ENCODE measurements at regions of chr19 and their contacts with region 1.

Region 1: GRCh38 chr19:44770550-44771257 is 7.0 kb upstream of the CBLC start:
- DNase-seq: peak; percentile 97
- ATAC-seq: peak; percentile 100
- H3K4me3 Mint-ChIP-seq: peak overlapping the region; percentile 73
- H3K27ac Mint-ChIP-seq: peak overlapping the region; percentile 86
- H3K4me1 Mint-ChIP-seq: peaks cover 30% of the 10 kb centered on the region
- H3K27me3 Mint-ChIP-seq: no peaks in the 10 kb centered on the region
- CTCF ChIP-seq: no peak

Region 2: DNA sequence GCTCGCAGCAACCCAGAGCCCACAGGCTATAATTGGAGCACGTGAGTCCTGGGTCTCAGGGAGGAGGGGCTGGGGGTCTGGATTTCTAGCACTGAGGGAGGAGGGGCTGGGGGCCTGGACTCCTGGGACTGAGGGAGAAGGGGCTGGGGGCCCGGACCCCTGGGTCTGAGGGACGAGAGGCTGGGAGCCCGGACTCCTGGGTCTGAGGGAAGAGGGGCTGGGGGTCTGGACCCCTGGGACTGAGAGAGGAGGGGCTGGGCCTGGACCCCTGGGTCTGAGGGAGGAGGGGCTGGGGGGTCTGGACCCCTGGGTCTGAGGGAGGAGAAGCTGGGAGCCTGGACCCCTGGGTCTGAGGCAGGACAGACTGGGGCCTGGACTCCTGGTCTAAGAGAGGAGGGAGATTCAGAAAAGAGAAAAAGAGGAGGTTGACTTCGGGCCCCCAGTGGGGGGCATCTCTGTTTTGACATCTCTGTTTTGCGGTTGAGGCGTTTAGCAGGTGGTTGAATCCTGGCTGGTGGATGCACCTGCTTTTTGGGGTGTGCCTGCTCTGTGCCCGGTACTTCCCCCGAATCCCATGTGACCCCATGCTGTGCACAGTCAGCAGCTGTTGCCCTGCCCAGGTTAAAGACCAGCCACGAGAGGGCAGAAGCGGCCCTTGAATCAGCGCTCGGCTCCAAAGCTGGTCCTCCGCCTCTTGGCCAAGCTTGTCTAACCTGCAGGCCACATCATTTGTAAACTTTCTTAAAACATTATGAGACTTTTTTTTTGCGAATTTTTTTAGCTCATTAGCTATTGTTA is 116.5 kb before region 1 on chr19:
- CTCF ChIA-PET with region 1: interaction called, 16 read pairs
- POLR2A ChIA-PET with region 1: interaction called, 10 read pairs
- intact Hi-C with region 1: loop called (anchors 1 kb)
- DNase-seq: peak; percentile 62
- ATAC-seq: peak; percentile 94
- H3K4me3 Mint-ChIP-seq: no peak overlapping the region
- H3K27ac Mint-ChIP-seq: peak overlapping the region; percentile 53
- H3K4me1 Mint-ChIP-seq: peaks cover 21% of the 10 kb centered on the region
- H3K27me3 Mint-ChIP-seq: no peaks in the 10 kb centered on the region
- CTCF ChIP-seq: no peak

Region 3: GRCh38 chr19:44741841-44742352 is 28.8 kb before region 1 on chr19:
- CTCF ChIA-PET with region 1: interaction called, 4 read pairs
- POLR2A ChIA-PET with region 1: interaction called, 10 read pairs
- intact Hi-C with region 1: no loop called
- DNase-seq: no peak
- ATAC-seq: peak; percentile 70
- H3K4me3 Mint-ChIP-seq: no peak overlapping the region
- H3K27ac Mint-ChIP-seq: peak overlapping the region; percentile 56
- H3K4me1 Mint-ChIP-seq: peaks cover 29% of the 10 kb centered on the region
- H3K27me3 Mint-ChIP-seq: no peaks in the 10 kb centered on the region
- CTCF ChIP-seq: no peak

Region 4: DNA sequence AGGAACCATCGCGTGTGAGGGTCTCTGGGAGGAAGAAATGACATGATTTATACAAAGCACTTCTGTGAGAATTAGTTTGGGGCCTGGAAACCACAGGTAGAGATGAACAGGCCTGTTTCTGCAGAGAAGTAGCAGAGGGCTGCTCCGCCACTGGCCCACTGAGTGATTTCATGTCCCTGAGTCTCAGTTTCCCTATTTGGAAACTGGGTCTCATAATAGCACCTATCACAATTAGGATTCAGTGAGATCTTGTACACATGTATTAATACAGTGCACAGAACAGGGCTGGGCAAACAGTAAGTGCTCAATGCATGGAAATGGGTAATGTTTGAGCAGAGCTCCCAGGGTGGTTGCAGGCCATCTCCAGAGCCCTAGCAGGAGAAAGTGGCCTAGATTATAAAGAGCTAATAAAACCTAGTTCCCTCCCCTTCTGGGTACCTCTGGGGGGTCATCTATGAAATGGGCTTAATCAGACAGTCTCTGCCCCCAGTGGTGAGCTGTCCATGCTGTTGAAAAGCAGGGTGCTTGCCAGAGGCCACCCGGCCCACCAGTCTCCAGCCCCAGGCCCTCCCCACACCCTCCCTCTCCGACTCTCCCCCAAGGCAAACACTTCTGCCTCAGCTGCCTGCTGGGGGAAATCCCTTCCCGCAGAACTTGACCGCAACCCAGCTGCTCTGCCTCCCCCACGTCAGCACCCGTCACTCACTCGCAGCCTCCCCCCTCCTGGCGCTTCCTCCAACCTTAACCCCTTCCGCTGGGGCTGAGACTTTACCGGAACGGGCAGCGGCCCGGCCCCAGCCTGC is 17.7 kb before region 1 on chr19:
- CTCF ChIA-PET with region 1: interaction called, 35 read pairs
- POLR2A ChIA-PET with region 1: interaction called, 283 read pairs
- intact Hi-C with region 1: loop called (anchors 1 kb)
- DNase-seq: peak; percentile 87
- ATAC-seq: peak; percentile 76
- H3K4me3 Mint-ChIP-seq: peak overlapping the region; percentile 95
- H3K27ac Mint-ChIP-seq: peak overlapping the region; percentile 96
- H3K4me1 Mint-ChIP-seq: peaks cover 68% of the 10 kb centered on the region
- H3K27me3 Mint-ChIP-seq: no peaks in the 10 kb centered on the region
- CTCF ChIP-seq: no peak

Region 5: GRCh38 chr19:44856421-44857083 is 85.8 kb after region 1 on chr19:
- CTCF ChIA-PET with region 1: no interaction called
- POLR2A ChIA-PET with region 1: no interaction called
- intact Hi-C with region 1: no loop called
- DNase-seq: no peak
- ATAC-seq: no peak
- H3K4me3 Mint-ChIP-seq: no peak overlapping the region
- H3K27ac Mint-ChIP-seq: no peak overlapping the region
- H3K4me1 Mint-ChIP-seq: no peaks in the 10 kb centered on the region
- H3K27me3 Mint-ChIP-seq: peaks cover 20% of the 10 kb centered on the region
- CTCF ChIP-seq: no peak

Region 6: DNA sequence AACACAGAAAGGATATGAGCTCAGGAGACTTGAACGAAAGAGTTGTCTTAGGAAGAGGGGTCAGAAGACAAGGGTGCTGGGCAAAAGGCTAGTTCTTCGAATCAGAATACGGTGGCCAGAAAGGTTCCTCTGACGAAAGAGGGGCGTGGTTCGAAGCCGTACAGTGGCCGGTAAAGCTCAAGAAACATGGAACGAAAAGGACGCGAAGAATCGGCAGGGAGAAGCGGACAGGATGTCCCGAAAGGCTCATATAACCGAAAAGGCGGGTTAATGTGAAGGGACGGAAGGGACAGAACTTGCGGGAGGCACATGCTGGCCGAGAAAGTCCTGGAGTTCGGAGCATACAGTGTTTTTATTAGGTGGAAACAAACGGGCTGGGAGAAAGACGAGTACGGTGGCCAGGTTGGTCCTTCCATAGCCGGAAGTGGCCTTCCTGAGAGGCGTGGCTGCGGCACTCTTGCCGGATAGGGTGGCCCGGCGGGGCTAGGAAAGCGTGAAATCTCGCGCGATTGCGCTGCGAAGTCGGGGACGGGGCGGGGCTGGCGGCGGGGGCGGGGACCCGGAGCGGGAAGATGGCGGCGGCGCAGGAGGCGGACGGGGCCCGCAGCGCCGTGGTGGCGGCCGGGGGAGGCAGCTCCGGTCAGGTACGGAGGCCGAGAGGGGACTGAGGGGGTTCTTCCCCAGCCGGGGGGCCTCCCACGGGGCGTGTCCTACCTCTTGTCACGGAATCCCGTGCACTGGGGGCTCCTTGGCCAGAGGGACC is 184.3 kb after region 1 on chr19 and contains the start of gene CLPTM1:
- CTCF ChIA-PET with region 1: no interaction called
- POLR2A ChIA-PET with region 1: interaction called, 4 read pairs
- intact Hi-C with region 1: loop called (anchors 5 kb)
- DNase-seq: peak; percentile 85
- ATAC-seq: peak; percentile 89
- H3K4me3 Mint-ChIP-seq: peak within 1 kb of the TSS; percentile 97
- H3K27ac Mint-ChIP-seq: peak within 1 kb of the TSS; percentile 97
- H3K4me1 Mint-ChIP-seq: peaks cover 57% of the 10 kb centered on the region
- H3K27me3 Mint-ChIP-seq: no peaks in the 10 kb centered on the region
- CTCF ChIP-seq: no peak
- total RNA-seq, gene CLPTM1: 87.0 and 92.1 TPM in 2 replicates

Measured in activated B cell treated with CpG ODN at 0.5 μM for 24 hours (primary cell).